ENCODE measurements at regions of chr17 and their contacts with region 1.

Region 1: GRCh38 chr17:80997424-80997841 is 5.8 kb downstream of the CHMP6 start:
- DNase-seq: no peak

Region 2: DNA sequence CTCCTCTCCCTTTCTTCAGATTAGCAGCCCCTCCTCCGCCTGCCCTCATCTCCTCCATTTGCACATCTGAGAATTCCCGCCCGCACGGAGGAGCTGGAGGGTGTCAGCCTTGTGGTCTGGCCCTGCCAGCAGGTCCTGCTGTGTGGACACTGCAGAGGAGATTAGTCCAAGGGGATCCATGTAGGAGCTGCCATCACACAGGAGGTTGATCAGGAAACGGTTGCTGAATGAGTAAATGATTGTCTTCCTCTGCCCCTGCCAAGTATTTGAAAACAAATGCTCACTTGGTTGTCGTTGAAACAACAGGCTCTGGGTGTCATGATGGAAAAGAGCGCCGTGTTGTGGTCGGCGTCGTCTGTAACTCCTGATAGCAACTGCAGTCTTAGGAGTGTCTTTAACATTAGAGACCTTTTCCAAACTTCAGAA is 69.6 kb before region 1 on chr17:
- intact Hi-C with region 1: no loop called
- DNase-seq: peak; percentile 76

Region 3: DNA sequence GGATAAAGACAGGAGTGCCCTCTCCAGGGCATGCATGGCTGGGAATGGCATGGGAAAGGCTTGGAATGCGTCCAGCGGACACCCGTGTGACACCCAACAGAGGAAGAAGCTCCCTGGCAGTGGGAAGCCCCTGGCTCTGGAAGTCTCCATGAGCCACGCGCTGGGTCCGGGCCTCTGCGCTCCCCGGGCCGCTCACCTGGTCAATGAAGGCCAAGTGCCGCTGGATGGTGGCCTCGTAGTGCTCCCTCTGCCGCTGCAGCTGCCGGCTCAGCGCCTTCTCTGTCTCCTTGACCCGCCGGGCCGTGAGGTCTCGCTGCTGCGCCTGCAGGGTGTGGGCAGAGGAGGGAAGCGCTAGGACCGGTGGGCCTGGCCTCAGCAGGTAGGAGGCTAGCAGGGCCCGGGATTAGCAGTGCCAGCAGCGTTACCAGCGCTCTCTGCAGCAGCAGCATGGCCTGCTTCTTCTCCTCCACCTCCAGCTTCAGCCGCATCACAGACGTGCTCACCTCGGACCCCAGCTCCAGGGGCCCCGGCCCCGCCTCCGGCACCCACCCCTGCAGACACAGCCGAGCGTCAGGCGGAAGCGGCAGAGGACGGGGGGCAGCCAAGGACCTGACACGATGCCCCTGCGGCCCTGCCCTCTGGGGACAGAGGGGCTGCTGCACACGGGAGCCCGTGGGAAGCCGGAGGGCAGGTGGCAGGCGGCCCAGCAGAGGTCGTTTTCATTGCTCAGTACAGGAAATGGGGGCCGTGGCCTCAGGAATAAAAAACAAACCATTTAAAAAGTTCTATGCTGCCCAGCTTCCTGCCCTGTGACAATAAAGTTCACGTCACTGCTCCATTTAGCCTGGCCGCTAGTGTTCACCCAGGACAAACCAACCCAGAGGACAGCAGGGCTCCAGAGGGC is 199.3 kb after region 1 on chr17:
- intact Hi-C with region 1: loop called in 1 of 2 experiments (anchors 1 kb)
- DNase-seq: no peak

Measured in posterior vena cava (tissue), 2 donors.